HEK293T (cell line): ENCODE measurements at regions of chr6 and their contacts with region 1.

Region 1: DNA sequence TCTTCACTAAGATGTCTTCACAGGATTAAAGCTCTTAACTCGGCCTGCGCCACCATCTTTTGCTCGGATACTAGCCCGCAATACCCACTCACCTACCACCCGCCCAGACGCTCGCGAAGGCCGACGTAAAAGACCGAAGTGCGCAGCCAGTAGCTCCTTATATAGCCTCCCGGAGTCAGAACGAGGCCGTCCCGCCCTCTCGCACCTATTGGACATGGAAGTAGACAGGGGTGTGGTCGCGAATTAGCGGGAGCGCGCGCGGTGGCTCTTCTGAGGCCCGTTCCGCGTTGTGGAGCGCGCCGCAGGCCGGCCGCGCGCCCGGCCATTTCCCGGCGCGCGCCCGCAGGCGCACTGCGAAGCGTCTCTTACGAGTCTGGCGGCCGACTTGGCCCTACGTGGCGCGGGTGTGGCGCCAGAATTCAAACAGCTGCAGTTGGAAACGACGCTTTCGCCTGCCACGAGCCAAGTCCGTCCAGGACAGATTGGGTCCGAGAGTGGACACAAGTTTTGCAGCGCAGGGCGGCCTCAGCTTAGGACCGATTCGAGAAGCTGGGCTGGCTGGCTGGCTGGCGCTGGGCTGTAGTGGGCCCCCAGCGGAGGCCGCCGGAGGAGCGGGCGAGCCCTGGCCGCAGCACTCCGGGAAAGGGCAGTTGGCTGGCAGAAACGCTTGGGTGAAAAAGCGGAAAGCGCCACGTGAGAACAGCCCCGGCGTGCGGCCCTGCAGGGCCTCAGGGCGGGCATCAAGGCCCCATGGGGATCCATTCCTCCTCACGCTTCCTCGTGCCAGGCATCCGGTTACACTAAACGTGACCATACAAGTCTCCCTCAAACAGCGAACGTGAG is 36.1 kb upstream of the SYNCRIP start:
- DNase-seq: peak; percentile 95

Region 2: GRCh38 chr6:85576476-85576875 is 102.3 kb before region 1 on chr6:
- CTCF ChIA-PET with region 1: no interaction called
- POLR2A ChIA-PET with region 1: interaction called, 11 read pairs
- DNase-seq: no peak

Region 3: DNA sequence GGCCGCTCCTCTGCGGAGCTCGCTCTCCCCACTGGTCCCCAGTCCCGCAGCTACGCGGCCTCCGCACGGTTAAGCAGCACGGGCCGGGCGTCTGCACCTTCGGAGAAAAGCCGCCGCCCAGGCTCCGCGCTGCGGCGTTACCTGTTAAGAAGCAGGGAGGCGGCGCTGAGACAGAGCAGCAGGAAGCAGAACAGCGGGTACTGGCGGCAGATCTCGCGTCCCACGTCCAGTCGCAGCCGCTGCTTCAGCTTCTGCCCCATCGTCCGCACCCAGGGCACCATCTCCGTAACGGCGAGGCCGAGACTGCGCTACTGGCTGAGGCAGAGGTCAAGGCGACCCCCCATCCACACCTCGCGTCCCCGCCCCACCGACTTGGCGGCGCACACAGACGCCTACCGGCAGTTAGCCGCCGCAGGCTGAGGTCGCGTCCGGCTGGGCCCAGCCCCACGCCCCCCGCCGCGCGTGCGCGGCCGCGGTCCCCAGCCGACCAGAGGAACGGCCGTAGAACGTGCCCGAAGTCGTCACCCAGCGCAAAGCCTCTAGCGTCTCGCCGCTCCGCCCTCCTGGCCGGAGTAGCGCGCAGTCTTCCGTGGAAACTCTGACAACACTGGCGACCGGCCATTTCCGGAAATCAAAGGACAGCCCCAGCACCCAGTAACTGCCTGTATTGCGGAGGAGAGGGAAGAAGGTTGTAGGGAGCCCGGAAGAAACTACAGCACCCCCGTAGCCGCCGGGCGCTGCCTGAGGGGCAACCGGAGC is 85.2 kb before region 1 on chr6 and contains the start of gene SNX14:
- CTCF ChIA-PET with region 1: no interaction called
- POLR2A ChIA-PET with region 1: interaction called, 24 read pairs
- DNase-seq: peak; percentile 85

Region 4: GRCh38 chr6:85948481-85948880 is 269.7 kb after region 1 on chr6:
- CTCF ChIA-PET with region 1: no interaction called
- POLR2A ChIA-PET with region 1: no interaction called
- DNase-seq: no peak